Activated CD4-positive, alpha-beta memory T cell treated with anti-CD3 and anti-CD28 coated beads, Interleukin-2, amount 10 ng/mL, durations not matched to agents 7 days and 5 days (primary cell): ENCODE measurements at regions of chr6 and their contacts with region 1.

Region 1: DNA sequence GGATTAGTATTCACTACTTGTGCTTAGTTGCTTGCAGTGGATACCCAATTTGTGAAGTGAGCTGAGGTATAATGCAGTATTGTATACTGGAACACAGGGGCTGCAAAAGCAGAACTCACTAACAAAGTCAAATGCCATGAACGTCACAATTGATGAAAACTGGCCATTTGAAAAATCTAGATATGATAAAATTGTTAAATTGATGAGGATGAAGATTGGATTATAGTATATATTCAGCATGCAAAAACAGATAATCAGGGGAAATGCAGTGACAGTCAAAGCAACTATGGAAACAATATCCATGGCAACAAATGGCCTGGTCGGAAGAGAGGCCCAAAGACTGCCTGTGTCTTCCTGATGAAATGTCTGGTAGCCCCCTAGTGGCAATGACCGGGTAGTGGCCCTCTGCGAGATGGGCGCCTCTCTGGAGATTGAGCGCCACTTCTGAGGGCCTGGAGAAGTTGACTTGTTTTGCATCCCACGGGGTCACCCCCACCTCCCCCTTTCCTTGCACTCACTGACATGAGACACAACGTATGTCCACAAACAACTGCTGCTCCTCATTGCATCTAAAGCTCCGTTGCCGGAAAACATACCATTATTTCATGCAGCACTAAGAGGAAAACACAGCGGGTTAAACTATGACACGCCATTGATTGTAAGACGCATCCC is 43.6 kb downstream of the C6orf15 start:
- DNase-seq: peak; percentile 67
- H3K4me3 Mint-ChIP-seq: no peak overlapping the region
- H3K27ac Mint-ChIP-seq: no peak overlapping the region
- H3K4me1 Mint-ChIP-seq: no peaks in the 10 kb centered on the region
- H3K27me3 Mint-ChIP-seq: peaks cover 7% of the 10 kb centered on the region

Region 2: DNA sequence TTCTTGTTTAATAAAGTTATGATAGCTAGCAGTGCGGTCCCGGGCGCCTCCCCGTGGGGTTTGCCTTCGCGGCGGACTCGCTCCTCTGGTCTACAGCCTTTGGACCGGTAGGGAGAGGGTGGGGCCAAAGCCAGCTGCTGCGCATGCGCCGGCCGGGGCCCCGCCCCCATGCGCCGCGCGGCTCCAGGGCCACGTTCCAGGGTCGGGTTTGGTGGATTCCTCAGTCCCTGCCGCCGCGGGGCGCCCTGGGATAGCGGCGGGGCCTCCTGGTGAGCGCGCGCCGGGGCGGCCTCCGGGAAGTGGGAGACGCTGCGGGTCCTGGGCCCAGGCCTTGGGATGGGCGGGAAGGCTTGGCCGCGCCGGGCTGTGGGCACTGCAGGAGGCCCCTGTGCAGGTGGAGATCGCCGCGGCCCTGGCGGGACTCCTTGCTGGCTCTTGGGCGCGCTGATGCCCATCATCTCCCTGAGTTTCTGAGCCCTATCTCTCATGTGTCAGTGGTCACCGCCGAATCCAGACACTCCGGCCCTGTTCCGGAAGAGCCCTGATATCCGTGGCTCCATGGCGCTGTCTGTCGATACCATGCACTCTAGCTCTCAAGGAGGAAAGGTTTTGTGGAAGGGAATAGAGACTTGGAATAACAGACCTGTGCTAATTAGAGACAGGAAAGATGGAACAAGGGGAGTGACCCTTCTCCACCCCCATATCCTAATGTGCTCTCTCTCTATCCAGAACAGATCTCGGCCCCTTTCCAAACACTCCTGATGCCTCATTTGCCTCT is 154.5 kb before region 1 on chr6 and contains the start of gene VARS2:
- CTCF ChIA-PET with region 1: interaction called, 27 read pairs
- POLR2A ChIA-PET with region 1: no interaction called
- DNase-seq: peak; percentile 90
- H3K4me3 Mint-ChIP-seq: peak within 1 kb of the TSS; percentile 87
- H3K27ac Mint-ChIP-seq: peak within 1 kb of the TSS; percentile 83
- H3K4me1 Mint-ChIP-seq: peaks cover 29% of the 10 kb centered on the region
- H3K27me3 Mint-ChIP-seq: no peaks in the 10 kb centered on the region
- total RNA-seq, gene VARS2: 33.6 to 37.0 TPM

Region 3: GRCh38 chr6:31079656-31080261 is 11.0 kb after region 1 on chr6:
- CTCF ChIA-PET with region 1: interaction called, 30 read pairs
- POLR2A ChIA-PET with region 1: no interaction called
- DNase-seq: peak; percentile 70
- H3K4me3 Mint-ChIP-seq: no peak overlapping the region
- H3K27ac Mint-ChIP-seq: no peak overlapping the region
- H3K4me1 Mint-ChIP-seq: peaks cover 9% of the 10 kb centered on the region
- H3K27me3 Mint-ChIP-seq: peaks cover 12% of the 10 kb centered on the region

Region 4: GRCh38 chr6:31087494-31088089 is 18.8 kb after region 1 on chr6:
- CTCF ChIA-PET with region 1: interaction called, 26 read pairs
- POLR2A ChIA-PET with region 1: no interaction called
- DNase-seq: peak; percentile 88
- H3K4me3 Mint-ChIP-seq: no peak overlapping the region
- H3K27ac Mint-ChIP-seq: no peak overlapping the region
- H3K4me1 Mint-ChIP-seq: peaks cover 15% of the 10 kb centered on the region
- H3K27me3 Mint-ChIP-seq: peaks cover 14% of the 10 kb centered on the region